ENCODE measurements at regions of chr2 and their contacts with region 1.

Region 1: GRCh38 chr2:143223556-143223955 is 94.3 kb downstream of the ARHGAP15 start:
- H3K4me3 ChIP-seq: no peak overlapping the region
- H3K27ac ChIP-seq: no peak overlapping the region
- H3K4me1 ChIP-seq: no peaks in the 10 kb centered on the region
- CTCF ChIP-seq: no peak

Region 2: GRCh38 chr2:143162123-143162837 is 61.3 kb before region 1 on chr2:
- CTCF ChIA-PET with region 1: interaction called, 26 read pairs
- POLR2A ChIA-PET with region 1: no interaction called
- H3K4me3 ChIP-seq: no peak overlapping the region
- H3K27ac ChIP-seq: no peak overlapping the region
- H3K4me1 ChIP-seq: peaks cover 17% of the 10 kb centered on the region
- CTCF ChIP-seq: peak; percentile 74

Region 3: GRCh38 chr2:143195511-143195910 is 28.0 kb before region 1 on chr2:
- CTCF ChIA-PET with region 1: no interaction called
- POLR2A ChIA-PET with region 1: no interaction called
- H3K4me3 ChIP-seq: no peak overlapping the region
- H3K27ac ChIP-seq: no peak overlapping the region
- H3K4me1 ChIP-seq: no peaks in the 10 kb centered on the region
- CTCF ChIP-seq: no peak

Region 4: DNA sequence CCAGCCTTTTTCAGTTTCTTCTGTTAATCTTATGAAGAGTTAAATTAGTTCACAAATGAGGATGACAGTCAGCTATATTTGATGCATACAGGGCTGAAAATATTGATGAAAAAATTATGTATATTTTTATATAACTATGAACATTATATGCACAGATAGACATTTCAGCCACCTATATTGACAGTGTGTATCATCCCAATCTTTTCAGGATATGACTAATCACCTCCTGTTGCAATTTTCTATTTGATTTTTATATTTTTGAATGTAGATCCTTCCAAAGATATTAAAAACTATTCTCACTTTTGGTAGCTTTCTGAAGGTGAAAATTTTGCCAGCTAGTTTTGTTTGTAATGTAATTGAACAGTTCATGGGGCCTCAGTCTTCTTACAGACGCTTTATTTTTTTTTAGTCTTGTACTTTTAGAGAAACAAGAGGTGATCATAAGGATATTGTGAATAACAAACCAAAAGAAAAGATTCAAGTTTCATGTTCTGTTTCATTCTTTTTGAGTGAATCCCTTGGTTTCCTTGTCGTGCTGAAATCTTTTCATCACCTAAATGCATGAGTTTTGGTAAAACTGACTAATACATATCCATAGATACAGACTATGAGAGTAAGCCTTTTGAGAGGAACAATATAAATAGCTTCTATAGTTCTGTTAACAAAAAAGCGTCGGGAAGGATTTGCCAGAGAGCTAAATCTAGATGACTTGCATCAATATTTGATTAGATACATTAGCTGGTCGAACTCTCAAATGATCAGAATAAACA is 28.8 kb after region 1 on chr2:
- CTCF ChIA-PET with region 1: no interaction called
- POLR2A ChIA-PET with region 1: no interaction called
- H3K4me3 ChIP-seq: no peak overlapping the region
- H3K27ac ChIP-seq: no peak overlapping the region
- H3K4me1 ChIP-seq: no peaks in the 10 kb centered on the region
- CTCF ChIP-seq: no peak